ENCODE measurements at regions of chr20 and their contacts with region 1.

Region 1: GRCh38 chr20:1965520-1966351 is 28.1 kb downstream of the PDYN start:
- DNase-seq: no peak
- H3K4me3 ChIP-seq: peak overlapping the region; percentile 3 to 33 (median 16)
- H3K27ac ChIP-seq: no peak overlapping the region
- H3K4me1 ChIP-seq: peaks cover 8 to 13% (median 11%) of the 10 kb centered on the region in 4 donors
- H3K27me3 ChIP-seq: peaks cover 0 to 52% (median 3%) of the 10 kb centered on the region in 4 donors
- CTCF ChIP-seq: peak; percentile 83 to 95 (median 94)
- EP300 ChIP-seq: no peak
- POLR2A ChIP-seq: no peak

Region 2: DNA sequence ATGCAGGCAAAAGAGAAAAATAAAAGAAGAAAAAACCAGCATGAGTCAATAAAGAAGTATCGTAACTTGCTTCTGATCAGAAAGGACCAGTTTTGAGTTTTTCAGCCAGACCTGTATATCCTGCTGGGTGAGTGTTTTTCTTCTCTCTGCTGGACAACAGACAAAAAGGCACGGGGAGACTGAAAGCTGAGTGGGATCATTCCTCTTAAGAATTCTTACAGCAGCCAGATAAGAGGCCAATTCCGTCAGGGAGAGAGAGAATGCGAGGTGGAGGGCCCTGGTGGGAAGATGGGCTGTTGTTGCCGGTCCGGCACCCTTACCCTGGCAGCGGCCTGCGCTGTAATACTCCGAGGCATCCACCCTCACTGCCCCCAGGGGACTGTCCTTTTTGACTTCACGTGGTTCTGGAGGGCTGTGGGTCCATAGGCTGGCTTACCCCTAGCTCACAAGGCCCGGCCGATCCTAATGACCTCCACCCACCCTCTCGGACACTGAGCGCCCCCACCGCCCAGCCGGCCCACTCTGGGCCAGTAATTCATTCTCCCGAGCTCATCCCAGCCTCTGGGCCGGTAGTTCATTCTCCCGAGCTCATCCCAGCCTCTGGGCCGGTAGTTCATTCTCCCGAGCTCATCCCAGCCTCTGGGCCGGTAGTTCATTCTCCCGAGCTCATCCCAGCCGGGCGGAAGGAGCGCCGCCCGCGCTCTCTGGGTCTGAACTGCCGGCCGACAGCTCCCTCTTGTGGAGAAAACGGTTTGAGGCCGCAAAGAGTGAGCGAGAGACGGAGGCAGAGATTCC is 188.9 kb before region 1 on chr20:
- intact Hi-C with region 1: loop called (anchors 10 kb)
- DNase-seq: peak; percentile 96
- H3K4me3 ChIP-seq: peak overlapping the region; percentile 60 to 69 (median 66)
- H3K27ac ChIP-seq: peak overlapping the region; percentile 45 to 81 (median 74)
- H3K4me1 ChIP-seq: peaks cover 11 to 20% (median 18%) of the 10 kb centered on the region in 4 donors
- H3K27me3 ChIP-seq: peaks cover 0 to 2% (median 0%) of the 10 kb centered on the region in 4 donors
- CTCF ChIP-seq: peak; percentile 73 to 86 (median 77)
- EP300 ChIP-seq: no peak
- POLR2A ChIP-seq: no peak

Region 3: GRCh38 chr20:1802385-1803060 is 163.2 kb before region 1 on chr20:
- intact Hi-C with region 1: loop called (anchors 2 kb)
- DNase-seq: no peak
- H3K4me3 ChIP-seq: peak overlapping the region; percentile 56 to 66 (median 64)
- H3K27ac ChIP-seq: peak overlapping the region; percentile 52 to 80 (median 60)
- H3K4me1 ChIP-seq: peaks cover 12 to 31% (median 29%) of the 10 kb centered on the region in 4 donors
- H3K27me3 ChIP-seq: no peaks in the 10 kb centered on the region
- CTCF ChIP-seq: peak; percentile 50 to 80 (median 64)
- EP300 ChIP-seq: no peak
- POLR2A ChIP-seq: no peak

Region 4: GRCh38 chr20:1894951-1895673 is 70.6 kb before region 1 on chr20 and contains the start of gene SIRPA:
- intact Hi-C with region 1: loop called (anchors 5 kb)
- DNase-seq: peak; percentile 93
- H3K4me3 ChIP-seq: peak within 1 kb of the TSS; percentile 77 to 93 (median 82)
- H3K27ac ChIP-seq: peak within 1 kb of the TSS; percentile 91 to 96 (median 96)
- H3K4me1 ChIP-seq: peaks cover 22 to 70% (median 66%) of the 10 kb centered on the region in 4 donors
- H3K27me3 ChIP-seq: no peaks in the 10 kb centered on the region
- CTCF ChIP-seq: no peak
- EP300 ChIP-seq: no peak
- POLR2A ChIP-seq: peak; percentile 18
- total RNA-seq, gene SIRPA: 19.5 to 39.8 (median 32.5) TPM

Region 5: GRCh38 chr20:2101865-2102584 is 136.3 kb after region 1 on chr20:
- intact Hi-C with region 1: no loop called
- DNase-seq: peak; percentile 97
- H3K4me3 ChIP-seq: peak overlapping the region; percentile 76 to 93 (median 90)
- H3K27ac ChIP-seq: peak overlapping the region; percentile 88 to 98 (median 96)
- H3K4me1 ChIP-seq: peaks cover 41 to 49% (median 44%) of the 10 kb centered on the region in 4 donors
- H3K27me3 ChIP-seq: no peaks in the 10 kb centered on the region
- CTCF ChIP-seq: peak in 1 of 3 experiments; percentile 24
- EP300 ChIP-seq: no peak
- POLR2A ChIP-seq: peak; percentile 8

Region 6: GRCh38 chr20:2172305-2173175 is 206.8 kb after region 1 on chr20:
- intact Hi-C with region 1: loop called (anchors 1 kb)
- DNase-seq: peak; percentile 95
- H3K4me3 ChIP-seq: no peak overlapping the region
- H3K27ac ChIP-seq: no peak overlapping the region
- H3K4me1 ChIP-seq: peaks cover 2 to 10% (median 5%) of the 10 kb centered on the region in 4 donors
- H3K27me3 ChIP-seq: peaks cover 0 to 4% (median 0%) of the 10 kb centered on the region in 4 donors
- CTCF ChIP-seq: peak; percentile 89 to 92 (median 89)
- EP300 ChIP-seq: no peak
- POLR2A ChIP-seq: no peak

Region 7: DNA sequence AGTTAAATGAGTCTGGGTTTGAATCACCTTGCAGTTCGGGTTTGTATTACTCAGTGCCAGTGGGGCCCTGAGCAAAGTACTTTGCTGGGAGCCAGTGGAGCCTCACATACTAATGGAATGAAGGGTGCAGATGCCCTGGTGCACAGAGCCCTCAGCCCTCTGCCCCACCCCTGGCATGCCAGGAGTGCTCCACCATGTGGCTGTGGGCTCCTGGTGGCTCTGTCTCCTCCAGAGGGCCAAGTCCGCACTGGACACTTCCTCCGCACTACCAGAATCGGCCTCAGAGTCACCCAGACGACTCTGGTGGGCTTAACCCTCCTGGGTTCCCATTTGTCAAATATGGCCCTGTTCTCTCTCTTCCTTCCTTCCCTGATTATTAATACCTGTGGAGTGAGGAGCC is 229.9 kb after region 1 on chr20:
- intact Hi-C with region 1: no loop called
- DNase-seq: no peak
- H3K4me3 ChIP-seq: no peak overlapping the region
- H3K27ac ChIP-seq: no peak overlapping the region
- H3K4me1 ChIP-seq: no peaks in the 10 kb centered on the region
- H3K27me3 ChIP-seq: peaks cover 0 to 18% (median 0%) of the 10 kb centered on the region in 4 donors
- CTCF ChIP-seq: no peak
- EP300 ChIP-seq: no peak
- POLR2A ChIP-seq: no peak

Measured in esophagus muscularis mucosa (tissue), 4 donors.